B cell (primary cell): ENCODE measurements at regions of chr1 and their contacts with region 1.

Region 1: GRCh38 chr1:108691942-108692723 is at the start of gene PRPF38B:
- DNase-seq: peak; percentile 95
- ATAC-seq: peak; percentile 92
- H3K4me3 ChIP-seq: peak within 1 kb of the TSS; percentile 84 to 93 (median 90)
- H3K4me3 Mint-ChIP-seq: peak within 1 kb of the TSS; percentile 98
- H3K27ac ChIP-seq: peak within 1 kb of the TSS; percentile 96 to 99
- H3K27ac Mint-ChIP-seq: peak within 1 kb of the TSS; percentile 97
- H3K4me1 ChIP-seq: peaks cover 21 to 35% of the 10 kb centered on the region in 2 donors
- H3K4me1 Mint-ChIP-seq: peaks cover 43% of the 10 kb centered on the region
- H3K27me3 ChIP-seq: no peaks in the 10 kb centered on the region
- H3K27me3 Mint-ChIP-seq: peaks cover 3% of the 10 kb centered on the region
- CTCF ChIP-seq: no peak
- total RNA-seq, gene PRPF38B: 107 and 114 TPM in 2 replicates

Region 2: DNA sequence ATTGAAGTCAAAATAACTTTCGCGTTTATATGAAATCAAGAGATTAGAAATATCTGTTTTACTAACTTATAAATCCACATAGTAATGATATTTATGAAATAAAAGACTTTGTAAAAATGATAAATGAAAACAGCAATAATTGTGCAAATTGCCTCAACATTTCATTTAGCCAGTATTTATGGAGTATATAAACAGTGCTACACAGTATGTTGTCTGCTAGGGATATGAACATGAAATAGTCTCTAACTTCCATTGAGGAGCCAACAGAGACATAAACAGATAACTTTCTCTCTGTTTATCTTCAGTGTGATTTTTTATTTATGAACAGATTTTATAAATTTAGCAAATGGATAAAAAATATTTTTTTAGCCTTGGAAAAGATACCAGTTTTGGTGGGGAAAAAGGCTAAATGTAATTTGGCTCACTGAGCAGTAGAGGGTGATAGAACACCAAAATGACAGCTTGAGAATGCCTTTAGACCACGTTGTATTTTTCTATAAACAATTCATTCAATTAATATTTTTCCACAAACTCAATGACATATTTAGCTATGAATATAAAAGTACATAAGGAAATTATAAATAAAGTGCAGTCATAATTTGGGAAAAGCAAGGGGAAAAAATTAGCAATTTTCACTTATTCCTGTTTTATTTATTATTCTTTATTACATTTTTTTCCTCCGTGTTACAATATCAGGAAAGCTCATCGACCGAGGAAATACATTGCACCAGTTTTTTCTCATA is 179.7 kb before region 1 on chr1:
- CTCF ChIA-PET with region 1: no interaction called
- POLR2A ChIA-PET with region 1: no interaction called
- intact Hi-C with region 1: loop called (anchors 5 kb)
- DNase-seq: peak; percentile 68
- ATAC-seq: peak; percentile 65
- H3K4me3 ChIP-seq: no peak overlapping the region
- H3K4me3 Mint-ChIP-seq: no peak overlapping the region
- H3K27ac ChIP-seq: no peak overlapping the region
- H3K27ac Mint-ChIP-seq: no peak overlapping the region
- H3K4me1 ChIP-seq: no peaks in the 10 kb centered on the region
- H3K4me1 Mint-ChIP-seq: no peaks in the 10 kb centered on the region
- H3K27me3 ChIP-seq: peaks cover 0 to 6% (median 0%) of the 10 kb centered on the region in 4 experiments
- H3K27me3 Mint-ChIP-seq: peaks cover 8% of the 10 kb centered on the region
- CTCF ChIP-seq: peak; percentile 97

Region 3: DNA sequence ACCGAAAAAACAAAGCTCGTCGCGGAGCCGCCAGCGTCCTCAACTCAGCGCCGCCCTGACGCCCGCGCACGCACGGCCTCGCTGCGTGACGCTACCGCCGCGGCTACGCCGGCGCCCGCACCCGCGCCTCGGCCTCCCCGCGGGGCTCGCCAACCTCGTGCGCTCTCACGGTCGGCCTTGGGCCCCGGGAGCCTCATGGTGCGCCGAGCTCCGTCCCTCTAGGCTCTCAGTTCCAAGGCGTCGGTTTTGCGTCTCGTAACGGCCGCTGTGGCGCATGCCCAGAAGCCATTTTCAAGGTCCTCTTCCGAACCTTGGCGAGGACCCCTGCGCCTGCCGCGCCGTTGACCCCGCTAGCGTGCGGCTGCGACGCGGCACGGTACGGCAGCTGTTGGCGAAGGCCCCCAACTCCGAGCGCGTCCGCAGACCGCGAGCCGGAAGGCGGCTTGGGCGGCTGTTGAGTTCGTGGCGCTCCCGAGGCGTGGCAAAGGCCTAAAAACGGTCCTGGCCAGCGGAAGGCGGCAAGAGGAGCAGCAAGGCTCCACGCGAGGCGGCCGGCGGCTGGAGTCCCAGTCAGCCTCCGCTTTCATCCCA is 31.0 kb before region 1 on chr1 and contains the start of gene HENMT1:
- CTCF ChIA-PET with region 1: interaction called, 12 read pairs
- POLR2A ChIA-PET with region 1: interaction called, 45 read pairs
- intact Hi-C with region 1: loop called (anchors 1 kb)
- DNase-seq: peak; percentile 94
- ATAC-seq: peak; percentile 84
- H3K4me3 ChIP-seq: peak within 1 kb of the TSS; percentile 2 to 69 (median 59)
- H3K4me3 Mint-ChIP-seq: peak within 1 kb of the TSS; percentile 88
- H3K27ac ChIP-seq: peak within 1 kb of the TSS; percentile 94 to 95
- H3K27ac Mint-ChIP-seq: peak within 1 kb of the TSS; percentile 96
- H3K4me1 ChIP-seq: peaks cover 8 to 10% of the 10 kb centered on the region in 2 donors
- H3K4me1 Mint-ChIP-seq: peaks cover 12% of the 10 kb centered on the region
- H3K27me3 ChIP-seq: no peaks in the 10 kb centered on the region
- H3K27me3 Mint-ChIP-seq: no peaks in the 10 kb centered on the region
- CTCF ChIP-seq: no peak
- total RNA-seq, gene HENMT1: 6.2 and 6.4 TPM in 2 replicates

Region 4: DNA sequence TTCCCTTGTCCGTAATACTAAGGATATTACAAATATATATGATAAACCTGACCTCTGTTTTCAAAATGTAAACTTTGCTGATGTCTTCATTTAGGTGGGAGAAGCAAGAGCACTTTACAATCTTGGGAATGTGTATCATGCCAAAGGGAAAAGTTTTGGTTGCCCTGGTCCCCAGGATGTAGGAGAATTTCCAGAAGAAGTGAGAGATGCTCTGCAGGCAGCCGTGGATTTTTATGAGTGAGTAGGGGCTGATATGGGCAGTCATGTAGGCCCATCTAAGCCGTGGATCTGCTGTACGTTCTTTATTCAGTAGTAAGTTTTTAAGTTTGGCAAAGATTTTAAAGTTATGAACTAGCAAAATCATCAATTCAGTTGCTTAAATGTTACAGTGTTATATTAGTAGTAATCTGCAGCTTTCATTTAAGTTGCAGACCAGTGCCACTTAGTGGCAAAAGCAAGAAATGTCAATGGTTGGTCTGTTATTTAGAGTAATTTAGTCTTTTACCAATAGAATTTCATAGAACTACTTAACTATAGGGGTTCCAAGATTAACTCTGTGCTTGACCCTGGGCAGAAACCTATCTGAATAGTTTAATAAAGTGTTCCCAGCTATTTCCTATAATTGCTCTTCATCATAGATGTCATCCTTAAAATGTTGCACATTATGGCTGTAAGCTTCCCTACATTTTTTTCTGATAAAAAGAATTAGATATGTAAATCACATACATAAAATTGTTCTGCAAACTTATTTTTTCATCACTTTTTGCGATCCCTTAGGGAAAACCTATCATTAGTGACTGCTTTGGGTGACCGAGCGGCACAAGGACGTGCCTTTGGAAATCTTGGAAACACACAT is 206.0 kb after region 1 on chr1:
- CTCF ChIA-PET with region 1: interaction called, 18 read pairs
- POLR2A ChIA-PET with region 1: no interaction called
- intact Hi-C with region 1: loop called (anchors 1 kb)
- DNase-seq: peak; percentile 66
- ATAC-seq: peak; percentile 62
- H3K4me3 ChIP-seq: no peak overlapping the region
- H3K4me3 Mint-ChIP-seq: no peak overlapping the region
- H3K27ac ChIP-seq: no peak overlapping the region
- H3K27ac Mint-ChIP-seq: no peak overlapping the region
- H3K4me1 ChIP-seq: no peaks in the 10 kb centered on the region
- H3K4me1 Mint-ChIP-seq: no peaks in the 10 kb centered on the region
- H3K27me3 ChIP-seq: no peaks in the 10 kb centered on the region
- H3K27me3 Mint-ChIP-seq: no peaks in the 10 kb centered on the region
- CTCF ChIP-seq: peak; percentile 77